GM12878 (cell line): ENCODE measurements at regions of chr3 and their contacts with region 1.

Region 1: DNA sequence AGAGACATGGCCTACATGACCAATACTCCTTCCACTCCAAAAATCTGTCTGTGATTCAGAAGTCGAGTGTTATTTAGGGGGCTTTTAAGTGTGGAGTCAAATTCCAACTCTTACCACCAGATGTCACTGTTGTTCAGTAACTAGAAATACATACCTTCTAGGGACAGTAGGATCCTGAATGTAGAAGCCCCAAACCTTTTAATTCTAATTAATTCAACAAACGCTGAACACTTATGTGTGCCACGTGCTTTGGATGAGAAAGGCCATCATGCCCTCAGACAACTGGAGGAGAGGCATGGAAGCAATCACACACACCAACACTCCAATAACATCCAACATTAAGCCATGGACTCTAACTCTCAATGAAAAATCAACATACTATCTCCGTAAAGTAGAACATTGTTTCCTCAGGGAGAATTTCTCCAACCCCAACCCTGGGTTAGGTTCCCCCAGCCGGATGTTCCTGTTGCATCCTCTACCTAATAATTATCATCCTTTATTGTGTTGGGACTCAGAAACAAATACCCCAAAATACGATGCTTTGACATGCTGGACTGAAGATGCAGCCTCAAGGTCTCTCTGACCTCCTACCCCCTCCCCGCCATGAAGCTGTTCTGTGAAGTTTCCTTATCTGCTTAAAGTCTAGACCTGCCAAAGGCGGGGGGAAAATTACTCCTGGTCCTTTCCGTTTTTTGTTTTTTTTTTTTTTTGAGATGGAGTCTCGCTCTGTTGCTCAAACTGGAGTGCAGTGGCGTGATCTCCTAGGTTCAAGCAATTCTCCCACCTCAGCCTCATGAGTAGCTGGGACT is 8.0 kb upstream of the CCDC13 start:
- DNase-seq: peak; percentile 39
- ATAC-seq: peak; percentile 96
- H3K4me3 ChIP-seq: no peak overlapping the region
- H3K27ac ChIP-seq: no peak overlapping the region
- H3K4me1 ChIP-seq: no peaks in the 10 kb centered on the region
- H3K27me3 ChIP-seq: no peaks in the 10 kb centered on the region
- CTCF ChIP-seq: peak; percentile 62 to 68 (median 63)
- EP300 ChIP-seq: no peak
- POLR2A ChIP-seq: no peak
- RAD21 ChIP-seq: peak; percentile 63

Region 2: GRCh38 chr3:42804106-42804830 is 23.2 kb after region 1 on chr3 and contains the start of gene HIGD1A:
- CTCF ChIA-PET with region 1: interaction called, 18 read pairs
- POLR2A ChIA-PET with region 1: interaction called, 3 read pairs
- RAD21 ChIA-PET with region 1: interaction called, 6 read pairs
- SMC1A ChIA-PET with region 1: interaction called, 7 read pairs
- in situ Hi-C with region 1: no loop called
- intact Hi-C with region 1: no loop called
- DNase-seq: peak; percentile 79
- ATAC-seq: peak; percentile 99
- H3K4me3 ChIP-seq: peak within 1 kb of the TSS; percentile 87
- H3K27ac ChIP-seq: peak within 1 kb of the TSS; percentile 66
- H3K4me1 ChIP-seq: no peaks in the 10 kb centered on the region; the same call in 1 of the 2 replicates
- H3K27me3 ChIP-seq: no peaks in the 10 kb centered on the region
- CTCF ChIP-seq: no peak
- EP300 ChIP-seq: 0 out of 4 replicates have a peak, but pooled peaks of 1 of the 2 experiments have one; percentile 28
- POLR2A ChIP-seq: peak; percentile 94
- RAD21 ChIP-seq: no peak
- polyA plus RNA-seq, gene HIGD1A: 405 to 487 TPM

Region 3: DNA sequence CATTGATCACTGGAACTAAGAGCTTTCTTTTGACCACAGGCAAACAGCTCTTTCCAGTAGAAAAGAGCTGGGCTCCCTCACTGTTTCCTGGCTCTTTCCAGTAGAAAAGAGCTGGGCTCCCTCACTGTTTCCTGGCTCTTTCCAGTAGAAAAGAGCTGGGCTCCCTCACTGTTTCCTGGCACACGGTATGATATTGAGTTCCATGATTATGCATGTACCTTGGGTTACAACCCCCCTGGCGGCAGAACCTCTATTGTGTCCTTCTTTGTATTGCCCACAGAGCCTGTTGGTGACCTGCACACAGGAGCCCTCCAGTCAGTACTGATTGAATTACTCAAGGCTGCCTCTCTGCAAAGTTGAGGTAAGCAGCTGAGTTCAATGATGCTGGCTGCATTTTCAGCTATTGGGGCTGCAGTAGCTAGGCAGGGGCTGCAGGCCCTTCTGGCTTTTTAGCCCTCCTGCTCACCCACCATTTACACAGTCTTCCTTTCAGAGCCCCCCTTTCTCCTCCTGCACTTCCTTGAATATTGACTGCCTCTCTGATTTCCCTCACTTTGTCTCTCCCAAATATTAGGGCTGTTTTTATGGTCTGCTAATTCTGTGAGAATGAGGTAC is 38.4 kb after region 1 on chr3:
- CTCF ChIA-PET with region 1: interaction called, 12 read pairs
- POLR2A ChIA-PET with region 1: no interaction called
- RAD21 ChIA-PET with region 1: no interaction called
- SMC1A ChIA-PET with region 1: interaction called, 5 read pairs
- in situ Hi-C with region 1: no loop called
- intact Hi-C with region 1: no loop called
- DNase-seq: no peak
- ATAC-seq: peak; percentile 63
- H3K4me3 ChIP-seq: no peak overlapping the region
- H3K27ac ChIP-seq: no peak overlapping the region
- H3K4me1 ChIP-seq: no peaks in the 10 kb centered on the region
- H3K27me3 ChIP-seq: 0 out of 4 replicates have a peak, but pooled peaks cover 0 to 2% of the 10 kb centered on the region in 2 experiments
- CTCF ChIP-seq: no peak
- EP300 ChIP-seq: no peak
- POLR2A ChIP-seq: no peak
- RAD21 ChIP-seq: no peak

Region 4: GRCh38 chr3:42831321-42831713 is 50.2 kb after region 1 on chr3:
- CTCF ChIA-PET with region 1: interaction called, 15 read pairs
- POLR2A ChIA-PET with region 1: no interaction called
- RAD21 ChIA-PET with region 1: interaction called, 4 read pairs
- SMC1A ChIA-PET with region 1: interaction called, 5 read pairs
- in situ Hi-C with region 1: loop called (anchors 5 kb)
- intact Hi-C with region 1: loop called (anchors 2 kb)
- DNase-seq: no peak
- ATAC-seq: peak; percentile 98
- H3K4me3 ChIP-seq: no peak overlapping the region
- H3K27ac ChIP-seq: no peak overlapping the region
- H3K4me1 ChIP-seq: no peaks in the 10 kb centered on the region
- H3K27me3 ChIP-seq: no peaks in the 10 kb centered on the region
- CTCF ChIP-seq: peak; percentile 71 to 80 (median 79)
- EP300 ChIP-seq: no peak
- POLR2A ChIP-seq: no peak
- RAD21 ChIP-seq: peak; percentile 68

Region 5: DNA sequence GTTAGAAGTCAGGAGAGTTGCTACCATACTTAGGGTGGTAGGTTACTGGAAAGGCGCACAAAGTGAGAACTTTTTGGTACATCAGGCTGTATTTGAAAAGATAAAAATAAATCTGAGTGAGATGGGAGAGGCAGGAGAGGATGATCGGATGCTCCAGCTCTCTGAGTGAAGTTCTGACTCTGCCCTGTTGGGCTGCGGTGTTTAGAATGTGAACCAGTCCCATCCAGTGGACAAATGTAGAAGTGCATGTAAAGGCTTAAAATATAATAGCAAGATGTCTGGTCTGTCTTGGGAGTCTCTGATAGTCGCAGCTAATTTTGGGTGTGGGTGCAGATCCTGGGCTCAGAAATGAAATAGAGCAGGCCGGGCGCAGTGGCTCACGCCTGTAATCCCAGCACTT is 58.5 kb after region 1 on chr3:
- CTCF ChIA-PET with region 1: interaction called, 39 read pairs
- POLR2A ChIA-PET with region 1: no interaction called
- RAD21 ChIA-PET with region 1: interaction called, 18 read pairs
- SMC1A ChIA-PET with region 1: interaction called, 34 read pairs
- in situ Hi-C with region 1: loop called (anchors 5 kb)
- intact Hi-C with region 1: loop called (anchors 2 kb)
- DNase-seq: peak; percentile 45
- ATAC-seq: peak; percentile 100
- H3K4me3 ChIP-seq: no peak overlapping the region; the same call in 1 of the 2 replicates
- H3K27ac ChIP-seq: no peak overlapping the region
- H3K4me1 ChIP-seq: no peaks in the 10 kb centered on the region
- H3K27me3 ChIP-seq: no peaks in the 10 kb centered on the region
- CTCF ChIP-seq: peak; percentile 69 to 80 (median 79)
- EP300 ChIP-seq: no peak
- POLR2A ChIP-seq: no peak
- RAD21 ChIP-seq: peak; percentile 71

Region 6: DNA sequence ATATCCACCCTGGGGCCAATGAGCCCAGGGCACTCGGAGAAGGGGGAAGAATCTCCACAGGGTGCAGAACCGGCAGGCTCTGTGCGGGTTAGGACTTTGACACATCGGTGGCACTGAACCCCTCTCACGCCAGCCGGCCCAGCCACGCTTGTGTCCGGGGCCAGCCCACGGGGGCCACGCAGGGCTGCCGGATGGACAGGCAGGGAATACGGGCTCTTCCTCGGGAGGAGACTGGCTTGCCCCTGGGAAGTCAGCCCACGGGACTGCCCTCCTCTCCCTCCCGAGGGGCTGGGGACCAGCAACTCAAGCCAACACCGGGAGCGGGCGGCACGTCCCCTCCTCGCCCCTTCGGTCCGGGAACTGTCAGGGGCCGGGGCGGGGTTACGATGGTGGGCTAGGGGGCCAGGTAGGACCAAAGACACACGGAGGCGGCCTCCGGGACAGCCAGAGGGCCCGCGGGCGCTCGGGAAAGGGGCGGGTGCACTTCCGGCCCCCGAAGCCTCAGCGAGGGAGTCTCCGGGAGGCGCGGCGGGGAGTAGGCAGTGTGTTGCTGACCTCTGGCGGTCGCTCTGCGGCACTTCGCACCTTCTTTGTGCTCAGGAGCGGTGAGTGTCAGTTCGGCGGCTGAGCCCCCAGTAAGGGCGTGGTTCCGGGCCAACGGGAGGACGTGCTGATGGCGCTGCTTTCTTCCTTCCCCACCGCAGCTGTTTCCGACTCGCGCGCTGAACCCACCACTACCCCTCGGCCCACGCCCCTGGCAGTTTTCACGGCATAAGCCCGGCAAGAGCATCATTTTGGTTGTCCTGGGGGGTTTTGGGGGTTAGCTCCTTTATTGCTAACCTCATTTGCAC is 99.7 kb after region 1 on chr3:
- CTCF ChIA-PET with region 1: interaction called, 30 read pairs
- POLR2A ChIA-PET with region 1: no interaction called
- RAD21 ChIA-PET with region 1: interaction called, 11 read pairs
- SMC1A ChIA-PET with region 1: interaction called, 7 read pairs
- in situ Hi-C with region 1: loop called (anchors 5 kb)
- intact Hi-C with region 1: loop called (anchors 1 kb)
- DNase-seq: peak; percentile 42
- ATAC-seq: peak; percentile 100
- H3K4me3 ChIP-seq: peak overlapping the region; percentile 64
- H3K27ac ChIP-seq: no peak overlapping the region
- H3K4me1 ChIP-seq: peaks cover 4% of the 10 kb centered on the region; the same call in 1 of the 2 replicates
- H3K27me3 ChIP-seq: no peaks in the 10 kb centered on the region
- CTCF ChIP-seq: peak; percentile 79 to 98 (median 95)
- EP300 ChIP-seq: no peak
- POLR2A ChIP-seq: peak; percentile 60
- RAD21 ChIP-seq: peak; percentile 80